Dorsolateral prefrontal cortex (tissue), 120 donors: ENCODE measurements at regions of chr9 and their contacts with region 1.

Region 1: DNA sequence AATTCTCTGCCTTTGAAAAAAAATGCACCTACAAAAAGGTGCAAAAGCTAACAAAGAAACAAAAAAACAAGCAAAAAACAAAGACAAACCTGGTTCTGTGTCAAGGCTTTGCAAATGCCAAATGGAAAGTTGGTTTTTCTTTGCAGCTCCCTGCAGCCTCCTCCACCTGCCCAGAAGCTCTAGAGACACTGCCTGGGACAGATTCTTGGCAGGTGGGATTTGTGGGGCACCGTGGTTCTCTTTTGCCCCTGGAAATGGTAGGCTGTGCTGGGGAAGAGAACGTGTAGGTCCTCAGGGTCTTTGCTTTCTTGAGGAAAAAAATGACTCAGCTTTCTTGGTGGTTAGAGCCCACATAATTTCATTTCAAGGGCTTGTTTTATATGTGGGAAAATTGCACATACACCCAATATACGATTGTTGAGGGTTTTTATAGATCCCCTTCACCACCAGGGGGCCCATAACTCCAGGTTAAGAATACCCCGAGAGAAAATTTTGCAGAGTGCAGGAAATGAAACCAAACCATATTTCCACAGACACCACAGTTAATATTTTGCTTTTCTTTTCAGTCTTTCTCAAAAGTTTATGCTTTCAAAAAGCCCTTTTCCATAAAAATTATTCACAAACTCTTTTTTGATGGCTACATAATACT is 58.7 kb downstream of the NXNL2 start:
- DNase-seq: peak in 2 of 10 donors; percentile 13 to 59
- H3K4me3 ChIP-seq: no peak overlapping the region
- H3K27ac ChIP-seq: no peak overlapping the region
- H3K27me3 ChIP-seq: peaks cover 0 to 7% (median 0%) of the 10 kb centered on the region in 45 donors
- CTCF ChIP-seq: peak; percentile 43 to 83 (median 66)

Region 2: GRCh38 chr9:88641456-88642240 is 48.0 kb after region 1 on chr9:
- intact Hi-C with region 1: no loop called
- DNase-seq: no peak
- H3K4me3 ChIP-seq: no peak overlapping the region
- H3K27ac ChIP-seq: no peak overlapping the region
- H3K27me3 ChIP-seq: peaks cover 0 to 3% (median 0%) of the 10 kb centered on the region in 45 donors
- CTCF ChIP-seq: no peak

Region 3: GRCh38 chr9:88733651-88734421 is 140.2 kb after region 1 on chr9:
- intact Hi-C with region 1: loop called in 1 of 2 experiments (anchors 10 kb)
- DNase-seq: no peak
- H3K4me3 ChIP-seq: no peak overlapping the region
- H3K27ac ChIP-seq: peak overlapping the region in 15 of 59 donors; percentile 21 to 68 (median 35)
- H3K27me3 ChIP-seq: no peaks in the 10 kb centered on the region
- CTCF ChIP-seq: no peak

Region 4: GRCh38 chr9:89000973-89001916 is 407.6 kb after region 1 on chr9:
- intact Hi-C with region 1: loop called (anchors 5 kb)
- DNase-seq: peak; percentile 76 to 92 (median 88)
- H3K4me3 ChIP-seq: peak overlapping the region in 51 of 59 donors; percentile 3 to 62 (median 34)
- H3K27ac ChIP-seq: peak overlapping the region in 30 of 59 donors; percentile 4 to 78 (median 40)
- H3K27me3 ChIP-seq: no peaks in the 10 kb centered on the region
- CTCF ChIP-seq: peak; percentile 33 to 90 (median 82)

Region 5: DNA sequence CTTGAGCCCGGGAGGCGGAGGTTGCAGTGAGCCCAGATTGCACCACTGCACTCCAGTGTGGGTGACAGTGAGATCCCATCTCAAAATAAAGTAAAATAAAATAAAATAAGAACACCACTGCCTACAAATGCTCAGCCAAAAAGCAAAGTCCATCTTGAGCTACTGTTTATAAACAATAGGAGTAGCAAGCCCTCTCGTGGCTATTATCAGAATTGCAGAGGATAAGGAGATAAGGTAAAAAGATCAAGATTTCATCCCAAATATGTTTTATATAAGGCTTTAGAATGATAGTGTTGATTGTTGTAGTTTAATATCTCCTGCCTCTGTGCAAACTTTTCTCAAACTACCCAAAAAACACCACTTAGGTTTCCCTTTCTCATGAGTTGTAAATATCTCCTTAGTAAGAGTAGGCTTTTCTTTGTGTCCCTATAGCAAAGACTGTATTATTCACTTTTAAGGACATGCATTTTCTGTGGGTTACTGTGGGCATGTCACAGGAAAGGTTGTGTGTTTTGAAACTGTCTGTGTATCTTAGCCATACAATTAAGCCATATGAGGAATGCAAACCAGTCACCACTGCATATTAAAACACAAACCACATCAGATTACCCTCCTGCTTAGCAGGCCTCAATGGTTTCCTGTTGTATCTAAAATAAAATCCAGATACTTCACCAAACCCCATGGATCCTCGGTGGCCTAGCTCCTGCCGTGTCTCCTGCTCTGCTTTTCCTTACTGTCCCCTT is 685.5 kb after region 1 on chr9:
- intact Hi-C with region 1: loop called in 1 of 2 experiments (anchors 10 kb)
- DNase-seq: no peak
- H3K4me3 ChIP-seq: no peak overlapping the region
- H3K27ac ChIP-seq: no peak overlapping the region
- H3K27me3 ChIP-seq: no peaks in the 10 kb centered on the region
- CTCF ChIP-seq: peak; percentile 56 to 83 (median 72)